Naive thymus-derived CD4-positive, alpha-beta T cell (primary cell): ENCODE measurements at regions of chr6 and their contacts with region 1.

Region 1: GRCh38 chr6:100880853-100881706 is at the start of gene ASCC3:
- DNase-seq: peak; percentile 80 to 93 (median 86)
- ATAC-seq: peak; percentile 98
- H3K4me3 ChIP-seq: peak within 1 kb of the TSS; percentile 85
- H3K4me3 Mint-ChIP-seq: peak within 1 kb of the TSS; percentile 97 to 100 (median 100)
- H3K27ac ChIP-seq: peak within 1 kb of the TSS; percentile 90
- H3K27ac Mint-ChIP-seq: peak within 1 kb of the TSS; percentile 95 to 100 (median 98)
- H3K4me1 ChIP-seq: peaks cover 24 to 27% of the 10 kb centered on the region in 2 donors
- H3K4me1 Mint-ChIP-seq: peaks cover 19 to 64% (median 50%) of the 10 kb centered on the region in 7 donors
- H3K27me3 ChIP-seq: no peaks in the 10 kb centered on the region
- H3K27me3 Mint-ChIP-seq: peaks cover 0 to 4% (median 3%) of the 10 kb centered on the region in 5 donors
- total RNA-seq, gene ASCC3: 40.7 to 73.8 (median 42.9) TPM

Region 2: DNA sequence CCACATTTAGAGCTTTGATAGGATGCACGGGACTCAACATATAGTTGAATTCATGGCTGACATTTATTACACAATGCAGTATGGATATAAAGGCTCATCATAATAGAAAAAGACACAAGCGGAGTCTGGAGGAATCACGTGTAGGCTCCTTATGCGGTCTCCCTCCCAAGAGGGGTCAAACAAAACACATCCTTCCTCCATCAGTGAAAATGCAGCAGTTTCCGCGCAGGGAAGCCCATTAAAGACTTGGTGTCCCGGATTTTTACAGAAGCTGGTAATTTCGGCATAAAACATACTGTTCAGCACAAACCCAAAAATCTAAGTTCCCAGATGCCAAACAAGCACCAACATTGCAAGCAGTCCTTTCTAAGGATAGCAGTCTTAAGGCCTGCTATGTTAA is 1367.0 kb before region 1 on chr6:
- CTCF ChIA-PET with region 1: no interaction called
- POLR2A ChIA-PET with region 1: interaction called, 4 read pairs
- intact Hi-C with region 1: loop called in 1 of 2 experiments (anchors 2 kb)
- DNase-seq: no peak
- ATAC-seq: no peak
- H3K4me3 ChIP-seq: peak overlapping the region; percentile 75
- H3K4me3 Mint-ChIP-seq: peak overlapping the region; percentile 26 to 99 (median 93)
- H3K27ac ChIP-seq: no peak overlapping the region
- H3K27ac Mint-ChIP-seq: peak overlapping the region in 5 of 9 donors; percentile 33 to 86 (median 65)
- H3K4me1 ChIP-seq: peaks cover 0 to 16% of the 10 kb centered on the region in 2 donors
- H3K4me1 Mint-ChIP-seq: peaks cover 4 to 32% (median 28%) of the 10 kb centered on the region in 7 donors
- H3K27me3 ChIP-seq: no peaks in the 10 kb centered on the region
- H3K27me3 Mint-ChIP-seq: peaks cover 0 to 12% (median 0%) of the 10 kb centered on the region in 5 donors

Region 3: GRCh38 chr6:100593522-100593921 is 287.6 kb before region 1 on chr6:
- CTCF ChIA-PET with region 1: no interaction called
- POLR2A ChIA-PET with region 1: no interaction called
- intact Hi-C with region 1: no loop called
- DNase-seq: no peak
- ATAC-seq: no peak
- H3K4me3 ChIP-seq: no peak overlapping the region
- H3K4me3 Mint-ChIP-seq: no peak overlapping the region
- H3K27ac ChIP-seq: no peak overlapping the region
- H3K27ac Mint-ChIP-seq: no peak overlapping the region
- H3K4me1 ChIP-seq: no peaks in the 10 kb centered on the region
- H3K4me1 Mint-ChIP-seq: peaks cover 0 to 6% (median 0%) of the 10 kb centered on the region in 7 donors
- H3K27me3 ChIP-seq: no peaks in the 10 kb centered on the region
- H3K27me3 Mint-ChIP-seq: no peaks in the 10 kb centered on the region

Region 4: GRCh38 chr6:100693249-100693927 is 187.7 kb before region 1 on chr6:
- CTCF ChIA-PET with region 1: no interaction called
- POLR2A ChIA-PET with region 1: no interaction called
- intact Hi-C with region 1: no loop called
- DNase-seq: no peak
- ATAC-seq: no peak
- H3K4me3 ChIP-seq: no peak overlapping the region
- H3K4me3 Mint-ChIP-seq: no peak overlapping the region
- H3K27ac ChIP-seq: no peak overlapping the region
- H3K27ac Mint-ChIP-seq: no peak overlapping the region
- H3K4me1 ChIP-seq: no peaks in the 10 kb centered on the region
- H3K4me1 Mint-ChIP-seq: no peaks in the 10 kb centered on the region
- H3K27me3 ChIP-seq: no peaks in the 10 kb centered on the region
- H3K27me3 Mint-ChIP-seq: no peaks in the 10 kb centered on the region

Region 5: DNA sequence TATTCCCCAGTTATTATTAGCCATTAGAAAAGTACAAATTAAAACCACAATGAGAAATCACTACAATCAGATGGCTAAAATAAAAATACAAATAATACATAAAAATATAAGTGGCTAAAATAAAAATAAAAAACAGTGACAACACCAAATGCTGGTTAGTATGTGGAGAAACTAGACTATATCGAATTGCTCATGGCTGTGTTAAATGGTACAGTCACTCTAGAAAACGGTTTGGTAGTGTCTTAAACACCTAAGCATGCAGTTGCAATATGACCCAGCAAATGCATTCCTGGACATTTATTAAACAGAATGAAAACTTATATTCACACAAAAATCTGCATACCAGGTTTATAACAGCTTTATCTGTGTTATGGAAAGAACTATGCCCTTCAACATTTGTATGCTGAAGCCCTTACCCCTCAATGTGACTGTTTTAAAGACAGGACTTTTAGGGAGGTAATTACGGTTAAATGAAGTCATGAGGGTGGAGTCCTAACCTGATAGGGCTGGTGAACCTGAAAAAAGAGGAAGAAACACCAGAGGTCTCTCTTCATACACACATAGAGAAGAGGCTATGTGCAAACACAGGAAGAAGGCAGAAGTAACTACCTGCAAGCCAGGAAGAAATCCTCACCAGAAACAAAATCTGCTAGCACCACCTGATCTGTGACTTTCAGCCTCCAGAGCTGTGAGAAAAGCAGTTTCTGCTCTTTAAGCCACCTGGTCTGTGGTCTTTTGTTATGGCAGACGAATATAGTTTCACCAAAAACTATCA is 84.8 kb before region 1 on chr6:
- CTCF ChIA-PET with region 1: no interaction called
- POLR2A ChIA-PET with region 1: no interaction called
- intact Hi-C with region 1: no loop called
- DNase-seq: no peak
- ATAC-seq: peak; percentile 32
- H3K4me3 ChIP-seq: no peak overlapping the region
- H3K4me3 Mint-ChIP-seq: no peak overlapping the region
- H3K27ac ChIP-seq: no peak overlapping the region
- H3K27ac Mint-ChIP-seq: no peak overlapping the region
- H3K4me1 ChIP-seq: no peaks in the 10 kb centered on the region
- H3K4me1 Mint-ChIP-seq: peaks cover 0 to 8% (median 3%) of the 10 kb centered on the region in 7 donors
- H3K27me3 ChIP-seq: no peaks in the 10 kb centered on the region
- H3K27me3 Mint-ChIP-seq: no peaks in the 10 kb centered on the region

Region 6: DNA sequence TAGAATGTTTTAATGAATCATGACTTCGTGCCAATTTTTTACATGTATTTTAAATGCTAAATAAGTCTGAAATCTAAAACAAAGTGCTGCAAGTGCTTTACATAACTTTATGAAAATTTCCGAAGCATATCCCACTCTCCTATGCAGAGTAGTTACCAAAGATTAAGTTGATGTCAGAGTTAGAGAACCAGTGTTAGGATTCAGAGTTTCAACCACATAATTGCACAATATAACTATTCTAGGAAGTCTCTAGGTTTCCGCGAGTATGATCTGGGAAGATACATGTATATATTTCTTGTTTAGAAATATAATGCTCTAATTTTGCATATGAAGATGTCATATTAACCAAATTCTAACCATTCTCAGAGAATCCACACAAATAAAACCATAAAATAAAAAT is 74.8 kb before region 1 on chr6:
- CTCF ChIA-PET with region 1: no interaction called
- POLR2A ChIA-PET with region 1: no interaction called
- intact Hi-C with region 1: no loop called
- DNase-seq: no peak
- ATAC-seq: no peak
- H3K4me3 ChIP-seq: no peak overlapping the region
- H3K4me3 Mint-ChIP-seq: no peak overlapping the region
- H3K27ac ChIP-seq: no peak overlapping the region
- H3K27ac Mint-ChIP-seq: no peak overlapping the region
- H3K4me1 ChIP-seq: no peaks in the 10 kb centered on the region
- H3K4me1 Mint-ChIP-seq: peaks cover 8 to 22% (median 21%) of the 10 kb centered on the region in 7 donors
- H3K27me3 ChIP-seq: no peaks in the 10 kb centered on the region
- H3K27me3 Mint-ChIP-seq: no peaks in the 10 kb centered on the region

Region 7: DNA sequence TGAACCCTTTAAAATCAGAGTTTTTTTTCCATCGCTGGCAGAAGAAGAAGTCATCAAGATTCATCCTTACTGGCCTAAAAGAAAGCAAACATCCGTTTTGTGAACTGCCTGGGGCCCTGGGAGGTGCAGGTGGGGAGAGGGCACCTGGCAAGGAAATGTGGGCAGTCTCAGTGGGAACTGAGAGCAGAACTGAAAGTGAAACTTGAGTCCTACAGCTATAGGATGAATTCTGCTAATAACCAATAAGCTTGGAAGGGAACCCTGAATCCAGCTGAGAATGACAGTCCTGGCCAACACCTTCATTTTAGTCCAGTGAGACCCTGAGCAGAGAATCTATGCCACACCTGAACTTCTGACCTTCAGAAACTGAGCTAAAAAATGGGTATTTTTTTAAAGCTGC is 130.1 kb after region 1 on chr6:
- CTCF ChIA-PET with region 1: no interaction called
- POLR2A ChIA-PET with region 1: no interaction called
- intact Hi-C with region 1: loop called in 1 of 2 experiments (anchors 5 kb)
- DNase-seq: peak in 6 of 9 donors; percentile 10 to 39 (median 29)
- ATAC-seq: peak; percentile 68
- H3K4me3 ChIP-seq: peak overlapping the region; percentile 8
- H3K4me3 Mint-ChIP-seq: peak overlapping the region in 9 of 10 donors; percentile 57 to 83 (median 72)
- H3K27ac ChIP-seq: peak overlapping the region; percentile 18
- H3K27ac Mint-ChIP-seq: peak overlapping the region in 8 of 9 donors; percentile 63 to 88 (median 74)
- H3K4me1 ChIP-seq: peaks cover 0 to 21% of the 10 kb centered on the region in 2 donors
- H3K4me1 Mint-ChIP-seq: peaks cover 10 to 35% (median 31%) of the 10 kb centered on the region in 7 donors
- H3K27me3 ChIP-seq: no peaks in the 10 kb centered on the region
- H3K27me3 Mint-ChIP-seq: no peaks in the 10 kb centered on the region